Transverse colon (tissue), 4 donors: ENCODE measurements at regions of chr3 and their contacts with region 1.

Region 1: GRCh38 chr3:117380631-117381030 is 671.1 kb downstream of the TUSC7 start:
- DNase-seq: no peak
- H3K4me3 ChIP-seq: no peak overlapping the region
- H3K27ac ChIP-seq: no peak overlapping the region
- H3K4me1 ChIP-seq: no peaks in the 10 kb centered on the region
- H3K27me3 ChIP-seq: no peaks in the 10 kb centered on the region
- CTCF ChIP-seq: no peak
- EP300 ChIP-seq: no peak
- POLR2A ChIP-seq: no peak

Region 2: DNA sequence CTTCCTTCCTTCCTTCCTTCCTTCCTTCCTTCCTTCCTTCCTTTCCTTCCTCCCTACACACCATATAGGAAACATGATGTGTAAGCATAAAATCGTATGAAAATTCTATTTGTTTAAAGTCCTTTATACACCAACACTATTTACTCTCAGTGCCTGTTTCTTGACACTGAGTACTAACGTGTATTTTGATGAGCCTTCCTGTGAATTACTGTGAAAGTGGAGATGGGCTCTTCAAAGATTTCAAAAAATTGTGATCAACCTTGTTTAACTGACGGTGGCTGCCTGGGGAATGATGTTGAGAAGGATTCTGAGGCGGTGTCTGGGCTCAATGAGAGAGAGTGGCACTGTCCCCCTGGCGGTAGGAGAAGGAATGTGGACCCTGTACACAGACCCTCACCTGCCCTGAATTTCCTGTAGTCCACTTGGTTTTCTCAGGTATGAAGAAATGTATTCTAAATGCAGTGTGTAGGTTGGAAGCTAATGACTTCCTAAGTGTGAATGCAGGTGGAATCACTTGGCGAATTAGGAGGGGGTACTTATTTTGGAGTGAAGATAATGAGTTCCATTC is 1519.4 kb before region 1 on chr3:
- in situ Hi-C with region 1: no loop called
- intact Hi-C with region 1: loop called (anchors 5 kb)
- DNase-seq: no peak
- H3K4me3 ChIP-seq: no peak overlapping the region
- H3K27ac ChIP-seq: no peak overlapping the region
- H3K4me1 ChIP-seq: peaks cover 0 to 8% (median 0%) of the 10 kb centered on the region in 4 donors
- H3K27me3 ChIP-seq: no peaks in the 10 kb centered on the region
- CTCF ChIP-seq: no peak
- EP300 ChIP-seq: no peak
- POLR2A ChIP-seq: no peak

Region 3: GRCh38 chr3:119310071-119310470 is 1929.4 kb after region 1 on chr3:
- in situ Hi-C with region 1: no loop called
- intact Hi-C with region 1: no loop called
- DNase-seq: no peak
- H3K4me3 ChIP-seq: no peak overlapping the region
- H3K27ac ChIP-seq: no peak overlapping the region
- H3K4me1 ChIP-seq: peaks cover 0 to 7% (median 3%) of the 10 kb centered on the region in 4 donors
- H3K27me3 ChIP-seq: no peaks in the 10 kb centered on the region
- CTCF ChIP-seq: no peak
- EP300 ChIP-seq: no peak
- POLR2A ChIP-seq: no peak